ENCODE measurements at regions of chr3 and their contacts with region 1.

Region 1: DNA sequence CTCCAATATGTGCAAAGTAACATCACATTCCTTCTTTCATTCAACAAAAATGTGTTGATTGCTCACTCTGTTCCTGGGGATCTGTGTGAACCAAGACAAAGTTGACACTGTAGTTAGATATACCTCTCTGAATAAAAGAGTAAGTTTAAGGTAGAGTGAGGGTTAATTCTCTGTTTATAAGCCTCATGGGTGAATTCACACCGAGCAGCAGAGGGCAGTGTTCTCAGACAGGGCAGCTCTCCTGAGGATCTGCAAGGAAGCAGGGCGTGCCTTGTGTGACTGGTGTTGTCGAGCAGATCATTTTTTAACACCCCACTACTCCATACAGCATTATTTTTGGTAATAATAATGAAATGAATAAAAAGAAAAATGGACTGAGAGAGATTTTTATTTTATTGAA is 34.4 kb downstream of the PAQR9 start:
- DNase-seq: peak; percentile 71
- ATAC-seq: peak; percentile 72
- H3K4me3 Mint-ChIP-seq: no peak overlapping the region
- H3K27ac Mint-ChIP-seq: no peak overlapping the region
- H3K4me1 Mint-ChIP-seq: peaks cover 8% of the 10 kb centered on the region
- H3K27me3 Mint-ChIP-seq: no peaks in the 10 kb centered on the region
- CTCF ChIP-seq: peak; percentile 53

Region 2: DNA sequence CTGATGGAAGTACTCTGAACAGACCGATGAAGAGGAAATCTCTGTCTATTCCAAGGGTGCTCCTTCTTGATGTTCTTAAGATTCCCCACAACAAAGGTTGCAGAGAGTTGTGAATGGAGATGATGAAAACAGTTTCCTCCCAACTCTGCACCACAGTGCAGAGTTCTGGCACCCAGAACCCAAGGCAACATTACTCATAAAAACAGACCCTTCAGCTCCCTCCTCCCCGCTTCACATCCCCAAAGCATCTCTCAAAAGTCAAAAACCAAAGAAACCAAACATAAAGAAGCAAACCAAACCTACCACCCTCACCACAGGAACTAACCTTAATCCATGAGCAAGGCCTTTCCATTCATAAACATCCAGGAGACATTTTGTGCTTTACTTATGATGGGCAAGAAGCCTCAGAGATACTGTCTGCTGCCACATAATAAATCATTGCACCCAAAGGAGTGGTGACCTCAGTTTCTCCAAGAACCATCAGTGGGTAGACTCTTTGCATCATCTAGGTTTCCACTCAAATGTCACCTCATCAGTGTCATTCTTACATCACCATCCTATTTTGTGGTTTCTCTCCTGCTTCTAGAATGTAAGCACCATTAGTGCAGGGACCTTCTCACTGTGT is 53.4 kb before region 1 on chr3:
- CTCF ChIA-PET with region 1: no interaction called
- POLR2A ChIA-PET with region 1: no interaction called
- DNase-seq: no peak
- ATAC-seq: no peak
- H3K4me3 Mint-ChIP-seq: no peak overlapping the region
- H3K27ac Mint-ChIP-seq: no peak overlapping the region
- H3K4me1 Mint-ChIP-seq: peaks cover 11% of the 10 kb centered on the region
- H3K27me3 Mint-ChIP-seq: no peaks in the 10 kb centered on the region
- CTCF ChIP-seq: no peak

Region 3: DNA sequence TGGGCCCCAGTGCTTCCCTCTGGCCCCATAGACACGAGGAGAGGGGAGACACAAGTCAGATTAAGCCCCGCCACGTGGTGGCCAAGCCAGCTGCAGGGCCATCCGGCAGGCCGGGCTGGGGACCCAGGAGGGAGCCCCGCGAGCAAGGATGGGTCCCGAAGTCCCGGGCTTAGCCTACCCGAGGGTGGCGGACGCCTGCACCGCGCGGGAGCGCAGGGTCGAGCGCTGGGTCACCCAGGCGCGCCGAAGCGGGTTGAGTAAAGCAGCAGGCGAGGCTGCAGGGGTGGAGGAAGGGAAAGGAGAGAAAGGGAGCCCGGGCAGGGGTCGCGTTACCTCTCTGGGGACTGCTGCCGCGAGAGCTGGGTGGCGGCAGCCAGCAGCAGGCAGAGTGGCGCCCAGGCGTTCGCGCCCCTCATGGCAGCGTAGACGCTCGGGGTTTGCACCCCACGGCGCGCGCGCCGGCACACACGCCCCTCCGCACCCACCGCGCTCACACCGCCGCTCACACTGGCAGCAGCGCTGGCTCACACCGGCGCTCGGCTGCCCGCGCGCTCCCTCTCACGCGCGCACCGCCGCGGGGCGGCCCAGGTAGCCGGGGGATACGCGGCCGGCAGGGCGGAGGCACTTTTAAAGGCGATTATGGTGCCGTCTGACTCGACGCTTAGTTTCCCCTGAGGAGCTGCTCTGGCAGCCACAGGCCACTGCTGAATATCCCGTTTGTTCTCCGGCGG is 40.5 kb before region 1 on chr3 and contains the start of gene PCOLCE2:
- CTCF ChIA-PET with region 1: interaction called, 13 read pairs
- POLR2A ChIA-PET with region 1: no interaction called
- DNase-seq: peak; percentile 69
- ATAC-seq: peak; percentile 79
- H3K4me3 Mint-ChIP-seq: peak within 1 kb of the TSS; percentile 78
- H3K27ac Mint-ChIP-seq: no peak within 1 kb of the TSS
- H3K4me1 Mint-ChIP-seq: peaks cover 22% of the 10 kb centered on the region
- H3K27me3 Mint-ChIP-seq: peaks cover 21% of the 10 kb centered on the region
- CTCF ChIP-seq: no peak
- total RNA-seq, gene PCOLCE2: 13.5 to 13.7 TPM (median 13.7 TPM) in 3 replicates

Region 4: DNA sequence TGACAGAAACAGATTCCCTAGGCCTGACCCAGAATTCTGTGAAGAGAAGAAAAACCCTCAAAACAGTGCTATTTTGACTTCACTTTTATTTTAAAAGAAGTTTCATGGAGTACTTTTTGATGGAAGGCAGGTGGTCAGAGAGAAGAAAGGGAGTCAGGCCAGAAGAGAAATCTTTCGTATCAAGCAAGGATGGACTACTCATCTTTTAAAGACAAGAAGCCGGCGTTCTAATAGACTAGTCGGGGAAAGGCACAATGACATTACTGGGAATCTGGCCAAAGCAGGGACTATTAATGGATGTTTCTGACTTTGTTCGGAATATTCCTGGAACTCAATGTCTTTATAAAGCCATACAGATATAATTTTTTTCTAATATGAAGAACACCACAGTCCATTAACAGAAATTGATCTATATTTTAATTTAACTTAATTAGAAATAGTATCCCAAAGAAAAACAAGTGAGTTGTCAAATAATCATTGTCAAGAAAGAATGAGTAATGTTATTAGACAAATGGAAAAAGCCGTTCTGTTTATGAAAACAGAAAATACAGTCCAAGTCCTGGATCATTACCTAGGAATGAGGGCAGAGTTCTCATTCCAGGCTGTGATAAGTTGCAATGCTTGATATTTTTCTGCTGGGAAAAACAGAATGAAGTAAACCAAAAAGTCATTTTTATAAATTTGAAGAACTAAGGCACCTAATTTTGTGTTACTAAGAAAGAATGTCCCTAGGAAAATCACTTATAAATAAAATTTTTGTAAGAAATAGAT is 16.5 kb before region 1 on chr3:
- CTCF ChIA-PET with region 1: interaction called, 11 read pairs
- POLR2A ChIA-PET with region 1: no interaction called
- DNase-seq: no peak
- ATAC-seq: no peak
- H3K4me3 Mint-ChIP-seq: no peak overlapping the region
- H3K27ac Mint-ChIP-seq: no peak overlapping the region
- H3K4me1 Mint-ChIP-seq: 0 out of 2 replicates have a peak, but pooled peaks cover 3% of the 10 kb centered on the region
- H3K27me3 Mint-ChIP-seq: no peaks in the 10 kb centered on the region
- CTCF ChIP-seq: no peak

Region 5: DNA sequence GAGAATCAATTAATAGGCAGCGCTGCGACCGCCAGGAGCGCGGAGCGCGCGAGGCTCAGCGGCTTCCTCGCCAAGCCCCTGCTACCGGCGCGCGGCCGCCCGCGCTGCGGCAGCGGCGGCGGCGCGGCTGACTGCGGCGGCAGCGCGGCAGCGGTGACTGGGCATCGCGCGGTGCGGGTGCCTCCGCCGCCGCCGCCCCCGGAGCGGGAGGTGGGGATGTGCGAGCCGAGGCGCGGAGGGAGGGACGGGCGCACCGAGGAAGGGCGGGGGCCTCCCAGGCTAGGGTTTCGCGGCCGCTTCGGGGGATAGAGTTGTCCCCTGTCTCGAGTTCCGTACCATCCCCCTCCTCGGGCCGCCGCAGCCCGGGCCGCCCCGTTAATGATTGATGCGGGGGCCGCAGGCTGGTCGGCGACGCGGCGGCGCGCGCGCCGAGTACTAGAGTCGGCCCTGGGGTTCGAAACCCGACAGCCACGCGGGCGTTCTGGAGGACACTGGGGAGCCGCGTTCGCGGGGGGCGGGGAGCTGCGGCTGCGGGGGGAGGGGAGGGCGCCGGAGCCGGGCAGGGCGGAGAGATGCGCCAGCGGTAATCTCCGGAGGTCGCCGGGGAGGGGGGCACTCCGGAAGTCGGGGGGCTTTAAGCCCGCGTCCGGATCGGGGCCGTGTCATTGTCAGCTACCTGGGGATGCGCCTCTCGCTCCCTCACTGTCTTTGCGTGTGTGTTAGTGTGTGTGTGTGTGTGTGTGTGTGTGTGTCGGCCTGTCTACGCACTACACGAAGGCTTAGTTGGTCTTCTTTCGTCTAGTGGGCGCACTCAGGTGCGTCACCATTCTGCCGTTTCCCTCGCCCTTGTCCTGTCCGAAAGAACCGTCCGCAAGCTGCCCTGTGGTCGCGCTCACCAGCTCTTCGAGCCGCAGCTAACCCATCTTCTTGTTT is 34.7 kb after region 1 on chr3 and contains the start of gene PAQR9:
- CTCF ChIA-PET with region 1: interaction called, 26 read pairs
- POLR2A ChIA-PET with region 1: no interaction called
- DNase-seq: peak; percentile 71
- ATAC-seq: peak; percentile 71
- H3K4me3 Mint-ChIP-seq: peak within 1 kb of the TSS; percentile 90
- H3K27ac Mint-ChIP-seq: peak within 1 kb of the TSS; percentile 49; the same call in 1 of the 2 replicates
- H3K4me1 Mint-ChIP-seq: peaks cover 15% of the 10 kb centered on the region
- H3K27me3 Mint-ChIP-seq: peaks cover 52% of the 10 kb centered on the region
- CTCF ChIP-seq: no peak
- total RNA-seq, gene PAQR9: 2.0 to 2.5 TPM (median 2.4 TPM) in 3 replicates

Region 6: DNA sequence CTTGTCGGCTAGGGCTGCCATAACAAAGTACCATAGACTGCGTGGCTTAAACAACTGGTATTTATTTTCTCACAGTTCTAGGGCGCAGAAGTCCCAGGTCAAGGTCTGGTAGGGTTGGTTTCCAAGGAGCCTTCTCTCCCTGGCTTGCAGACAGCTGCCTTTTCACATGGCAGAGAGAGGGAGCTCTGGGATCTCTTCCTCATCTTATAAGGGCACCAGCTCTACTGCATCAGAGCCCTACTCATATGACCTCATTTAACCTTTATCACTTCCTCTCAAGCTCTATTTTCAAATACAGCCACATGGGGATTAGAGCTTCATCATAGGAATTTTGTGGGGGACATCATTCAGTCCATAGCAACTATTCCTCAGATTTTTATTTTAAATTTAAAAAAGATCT is 52.0 kb after region 1 on chr3:
- CTCF ChIA-PET with region 1: interaction called, 11 read pairs
- POLR2A ChIA-PET with region 1: no interaction called
- DNase-seq: no peak
- ATAC-seq: peak; percentile 89
- H3K4me3 Mint-ChIP-seq: no peak overlapping the region
- H3K27ac Mint-ChIP-seq: no peak overlapping the region
- H3K4me1 Mint-ChIP-seq: peaks cover 18% of the 10 kb centered on the region
- H3K27me3 Mint-ChIP-seq: no peaks in the 10 kb centered on the region
- CTCF ChIP-seq: no peak

Region 7: GRCh38 chr3:143139762-143140161 is 210.7 kb after region 1 on chr3:
- CTCF ChIA-PET with region 1: no interaction called
- POLR2A ChIA-PET with region 1: no interaction called
- DNase-seq: no peak
- ATAC-seq: no peak
- H3K4me3 Mint-ChIP-seq: no peak overlapping the region
- H3K27ac Mint-ChIP-seq: no peak overlapping the region
- H3K4me1 Mint-ChIP-seq: peaks cover 16% of the 10 kb centered on the region
- H3K27me3 Mint-ChIP-seq: no peaks in the 10 kb centered on the region
- CTCF ChIP-seq: no peak